H1 (cell line): ENCODE measurements at regions of chr1 and their contacts with region 1.

Region 1: DNA sequence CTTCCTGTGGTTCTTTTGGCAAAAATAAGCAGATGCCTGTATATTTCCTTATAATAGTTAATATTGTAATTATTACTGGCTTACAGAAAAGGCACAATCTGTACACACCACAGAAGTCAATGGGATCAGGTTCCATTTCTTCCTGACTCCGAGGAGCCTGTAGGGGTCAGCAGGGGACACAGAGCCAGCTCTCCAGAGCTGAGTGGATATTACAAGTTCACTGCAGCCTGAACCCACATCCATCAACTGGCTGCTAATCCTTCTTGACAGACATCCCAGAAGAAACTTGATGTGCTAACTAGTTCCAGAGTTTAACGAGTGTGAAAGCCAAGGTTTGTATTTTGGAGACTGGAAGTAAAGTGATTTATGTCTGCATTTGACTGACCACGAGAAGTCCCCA is 203.8 kb downstream of the LMX1A start:
- DNase-seq: no peak
- H3K4me3 ChIP-seq: no peak overlapping the region
- H3K27ac ChIP-seq: no peak overlapping the region
- H3K4me1 ChIP-seq: peaks cover 0 to 9% (median 1%) of the 10 kb centered on the region in 4 experiments; a peak in 1 of 7 replicates
- H3K27me3 ChIP-seq: no peaks in the 10 kb centered on the region; a peak in 1 of 7 replicates
- CTCF ChIP-seq: peak; percentile 62 to 74 (median 62)
- EP300 ChIP-seq: no peak
- POLR2A ChIP-seq: no peak
- RAD21 ChIP-seq: peak; percentile 69 to 77

Region 2: DNA sequence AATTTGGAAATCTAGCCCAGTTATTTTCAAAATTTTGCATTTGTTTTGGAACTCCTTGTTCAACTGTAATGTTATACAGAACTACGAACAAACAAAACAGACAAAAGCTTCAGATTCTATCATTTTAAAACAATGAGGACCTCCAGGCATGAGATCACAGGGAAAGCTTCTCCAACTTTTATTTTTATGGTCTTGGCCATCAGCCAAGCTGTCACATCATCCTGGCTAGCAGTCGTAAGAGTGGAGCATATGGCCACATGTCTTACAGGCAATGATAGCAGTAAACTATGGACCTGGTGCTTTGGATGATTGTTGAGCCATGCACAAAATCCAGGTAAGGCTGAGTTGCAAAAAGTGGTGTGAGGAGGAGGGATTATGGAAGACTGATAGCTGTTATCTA is 95.8 kb before region 1 on chr1:
- CTCF ChIA-PET with region 1: no interaction called
- POLR2A ChIA-PET with region 1: no interaction called
- DNase-seq: no peak
- H3K4me3 ChIP-seq: no peak overlapping the region
- H3K27ac ChIP-seq: no peak overlapping the region
- H3K4me1 ChIP-seq: peaks cover 0 to 6% (median 1%) of the 10 kb centered on the region in 4 experiments; a peak in 3 of 7 replicates
- H3K27me3 ChIP-seq: peaks cover 3 to 12% (median 7%) of the 10 kb centered on the region in 4 experiments; a peak in 6 of 7 replicates
- CTCF ChIP-seq: no peak
- EP300 ChIP-seq: no peak
- POLR2A ChIP-seq: no peak
- RAD21 ChIP-seq: no peak

Region 3: GRCh38 chr1:165129568-165130164 is 23.1 kb before region 1 on chr1:
- CTCF ChIA-PET with region 1: interaction called, 32 read pairs
- POLR2A ChIA-PET with region 1: no interaction called
- DNase-seq: peak; percentile 53 to 87
- H3K4me3 ChIP-seq: no peak overlapping the region
- H3K27ac ChIP-seq: no peak overlapping the region
- H3K4me1 ChIP-seq: no peaks in the 10 kb centered on the region
- H3K27me3 ChIP-seq: no peaks in the 10 kb centered on the region
- CTCF ChIP-seq: peak; percentile 68 to 92 (median 83)
- EP300 ChIP-seq: no peak
- POLR2A ChIP-seq: no peak
- RAD21 ChIP-seq: peak; percentile 84 to 86

Region 4: DNA sequence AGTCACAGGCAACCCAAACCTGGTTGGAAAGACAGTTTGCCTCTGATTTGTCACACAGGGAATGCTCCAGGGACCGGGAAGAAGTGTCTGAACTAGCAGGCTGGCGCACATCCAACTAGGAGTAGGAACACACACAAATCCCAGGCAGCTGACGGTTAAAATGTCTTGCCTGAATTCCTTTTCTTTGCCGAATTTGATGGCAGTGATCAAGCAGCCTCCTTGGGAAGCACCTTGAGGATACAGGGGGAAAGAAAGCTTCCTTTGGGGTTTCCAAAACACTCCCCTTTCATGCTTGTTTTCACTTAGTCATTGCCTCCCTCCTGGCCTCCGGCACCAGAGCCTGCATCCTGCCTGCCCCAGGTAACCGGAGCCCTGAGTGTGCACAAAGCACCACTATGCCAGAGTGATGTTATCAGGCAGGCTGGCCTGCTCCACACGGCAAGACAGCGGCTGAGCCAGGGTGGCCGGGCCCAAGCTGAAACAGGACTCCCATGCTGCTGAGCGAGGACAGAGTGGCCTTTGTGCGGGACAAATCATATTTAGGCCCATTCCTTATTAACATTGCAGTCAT is 10.0 kb after region 1 on chr1:
- CTCF ChIA-PET with region 1: interaction called, 22 read pairs
- POLR2A ChIA-PET with region 1: no interaction called
- DNase-seq: peak in 1 of 2 experiments; percentile 49
- H3K4me3 ChIP-seq: no peak overlapping the region
- H3K27ac ChIP-seq: no peak overlapping the region
- H3K4me1 ChIP-seq: no peaks in the 10 kb centered on the region
- H3K27me3 ChIP-seq: no peaks in the 10 kb centered on the region; a peak in 1 of 7 replicates
- CTCF ChIP-seq: no peak
- EP300 ChIP-seq: no peak
- POLR2A ChIP-seq: no peak
- RAD21 ChIP-seq: no peak

Region 5: GRCh38 chr1:165228676-165229075 is 75.9 kb after region 1 on chr1:
- CTCF ChIA-PET with region 1: interaction called, 13 read pairs
- POLR2A ChIA-PET with region 1: no interaction called
- DNase-seq: no peak
- H3K4me3 ChIP-seq: no peak overlapping the region
- H3K27ac ChIP-seq: no peak overlapping the region
- H3K4me1 ChIP-seq: peaks cover 0 to 5% (median under 1%) of the 10 kb centered on the region in 4 experiments; a peak in 2 of 7 replicates
- H3K27me3 ChIP-seq: peaks cover 0 to 15% (median 11%) of the 10 kb centered on the region in 4 experiments; a peak in 6 of 7 replicates
- CTCF ChIP-seq: no peak
- EP300 ChIP-seq: no peak
- POLR2A ChIP-seq: no peak
- RAD21 ChIP-seq: no peak

Region 6: GRCh38 chr1:165248969-165249571 is 96.3 kb after region 1 on chr1:
- CTCF ChIA-PET with region 1: interaction called, 10 read pairs
- POLR2A ChIA-PET with region 1: no interaction called
- DNase-seq: no peak
- H3K4me3 ChIP-seq: no peak overlapping the region
- H3K27ac ChIP-seq: no peak overlapping the region
- H3K4me1 ChIP-seq: peaks cover 0 to 7% (median 5%) of the 10 kb centered on the region in 4 experiments; a peak in 4 of 7 replicates
- H3K27me3 ChIP-seq: no peaks in the 10 kb centered on the region; a peak in 1 of 7 replicates
- CTCF ChIP-seq: no peak
- EP300 ChIP-seq: no peak
- POLR2A ChIP-seq: no peak
- RAD21 ChIP-seq: no peak

Region 7: GRCh38 chr1:165303386-165303785 is 150.7 kb after region 1 on chr1:
- CTCF ChIA-PET with region 1: no interaction called
- POLR2A ChIA-PET with region 1: no interaction called
- DNase-seq: no peak
- H3K4me3 ChIP-seq: no peak overlapping the region
- H3K27ac ChIP-seq: no peak overlapping the region
- H3K4me1 ChIP-seq: peaks cover 0 to 2% (median 0%) of the 10 kb centered on the region in 4 experiments; a peak in 2 of 7 replicates
- H3K27me3 ChIP-seq: no peaks in the 10 kb centered on the region
- CTCF ChIP-seq: no peak
- EP300 ChIP-seq: no peak
- POLR2A ChIP-seq: no peak
- RAD21 ChIP-seq: no peak